ENCODE measurements at regions of chr11 and their contacts with region 1.

Region 1: GRCh38 chr11:67265633-67266423 is 445 bp upstream of the GRK2 start:
- DNase-seq: peak; percentile 88
- H3K4me3 ChIP-seq: peak overlapping the region in 3 of 4 donors; percentile 5 to 25 (median 24)
- H3K27ac ChIP-seq: peak overlapping the region; percentile 72 to 80 (median 76)
- H3K4me1 ChIP-seq: peaks cover 0 to 71% (median 67%) of the 10 kb centered on the region in 4 donors
- H3K27me3 ChIP-seq: no peaks in the 10 kb centered on the region
- CTCF ChIP-seq: peak; percentile 60 to 70 (median 64)
- EP300 ChIP-seq: no peak
- POLR2A ChIP-seq: no peak

Region 2: DNA sequence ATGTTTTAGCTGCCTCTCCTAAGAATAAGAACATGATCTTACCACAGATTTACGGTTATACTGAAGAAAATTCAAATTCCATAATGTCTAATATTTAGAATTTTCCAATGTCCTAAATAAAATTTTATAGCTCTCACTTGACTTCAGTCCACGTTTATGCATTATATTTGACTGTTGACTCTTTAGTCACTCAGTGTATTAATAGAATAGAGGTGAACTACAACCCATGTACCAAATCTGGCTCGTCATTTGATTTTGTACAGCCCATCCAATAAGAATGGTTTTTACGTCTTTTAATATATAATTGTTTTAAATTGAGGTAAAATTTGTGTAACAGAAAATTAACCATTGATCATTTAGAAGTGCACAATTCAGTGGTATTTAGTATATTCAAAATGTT is 111.9 kb before region 1 on chr11:
- intact Hi-C with region 1: no loop called
- DNase-seq: no peak
- H3K4me3 ChIP-seq: no peak overlapping the region
- H3K27ac ChIP-seq: no peak overlapping the region
- H3K4me1 ChIP-seq: peaks cover 0 to 12% (median 10%) of the 10 kb centered on the region in 4 donors
- H3K27me3 ChIP-seq: no peaks in the 10 kb centered on the region
- CTCF ChIP-seq: no peak
- EP300 ChIP-seq: no peak
- POLR2A ChIP-seq: no peak

Region 3: GRCh38 chr11:67288452-67289225 is 22.8 kb after region 1 on chr11:
- intact Hi-C with region 1: loop called (anchors 1 kb)
- DNase-seq: peak; percentile 96
- H3K4me3 ChIP-seq: peak overlapping the region; percentile 81 to 91 (median 84)
- H3K27ac ChIP-seq: peak overlapping the region; percentile 95 to 97 (median 96)
- H3K4me1 ChIP-seq: peaks cover 0 to 61% (median 39%) of the 10 kb centered on the region in 4 donors
- H3K27me3 ChIP-seq: no peaks in the 10 kb centered on the region
- CTCF ChIP-seq: peak in 1 of 4 experiments; percentile 33
- EP300 ChIP-seq: no peak
- POLR2A ChIP-seq: peak; percentile 38 to 58

Region 4: GRCh38 chr11:67382276-67383136 is 116.7 kb after region 1 on chr11:
- intact Hi-C with region 1: loop called (anchors 5 kb)
- DNase-seq: peak; percentile 90
- H3K4me3 ChIP-seq: no peak overlapping the region
- H3K27ac ChIP-seq: no peak overlapping the region
- H3K4me1 ChIP-seq: peaks cover 0 to 18% (median 13%) of the 10 kb centered on the region in 4 donors
- H3K27me3 ChIP-seq: no peaks in the 10 kb centered on the region
- CTCF ChIP-seq: peak; percentile 98 to 99 (median 98)
- EP300 ChIP-seq: no peak
- POLR2A ChIP-seq: no peak